HepG2 (cell line): ENCODE measurements at regions of chr2 and their contacts with region 1.

Region 1: GRCh38 chr2:167814881-167815718 is 432.3 kb downstream of the STK39 start:
- DNase-seq: peak; percentile 100
- ATAC-seq: peak; percentile 93
- H3K4me3 ChIP-seq: peak overlapping the region in 2 of 3 experiments; percentile 18 to 42; a peak in 4 of 6 replicates
- H3K27ac ChIP-seq: peak overlapping the region; percentile 90
- H3K4me1 ChIP-seq: peaks cover 69% of the 10 kb centered on the region
- H3K27me3 ChIP-seq: no peaks in the 10 kb centered on the region
- CTCF ChIP-seq: no peak
- EP300 ChIP-seq: peak; percentile 88 to 99; a peak in 3 of 4 replicates
- POLR2A ChIP-seq: no peak
- RAD21 ChIP-seq: 0 out of 2 replicates have a peak, but pooled peaks have one; percentile 36

Region 2: DNA sequence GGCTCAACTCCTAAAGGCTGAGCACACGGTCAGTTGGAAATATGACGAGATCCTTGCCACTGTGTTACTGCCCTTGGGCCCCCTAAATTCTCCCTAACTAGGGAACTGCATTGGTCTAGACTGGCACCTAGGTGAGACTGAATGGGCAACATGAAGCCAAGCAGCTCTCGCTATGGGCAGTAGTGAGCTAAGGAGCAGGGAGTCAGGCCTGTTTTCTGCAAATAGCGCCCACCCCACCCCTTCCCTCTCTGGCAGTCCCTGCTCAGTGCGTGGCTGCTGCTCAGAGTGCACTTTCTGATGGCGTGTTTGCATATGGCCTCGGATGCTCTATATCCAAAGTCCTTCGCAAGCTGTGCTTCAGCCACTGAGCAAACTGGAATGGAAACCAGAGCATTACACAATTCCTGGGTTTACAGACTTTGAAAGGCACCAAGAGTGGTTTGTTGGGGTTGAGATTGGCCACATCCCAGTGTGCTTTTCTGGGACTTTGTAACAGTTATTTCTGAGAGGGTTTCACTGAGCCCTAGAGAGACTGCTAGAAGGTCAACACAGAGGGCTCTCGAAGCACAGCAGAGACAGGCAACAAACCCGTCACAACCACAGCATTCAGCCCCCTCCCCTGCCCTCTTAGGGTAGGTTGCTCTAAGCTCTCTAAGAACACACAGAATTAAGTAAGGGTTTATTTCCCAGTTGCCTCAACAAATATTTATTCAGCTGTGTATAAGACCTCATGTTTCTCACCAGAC is 12.4 kb after region 1 on chr2:
- CTCF ChIA-PET with region 1: no interaction called
- POLR2A ChIA-PET with region 1: interaction called, 16 read pairs
- in situ Hi-C with region 1: no loop called
- intact Hi-C with region 1: no loop called
- DNase-seq: peak; percentile 99
- ATAC-seq: peak; percentile 99
- H3K4me3 ChIP-seq: peak overlapping the region in 1 of 3 experiments; percentile 35; a peak in 3 of 6 replicates
- H3K27ac ChIP-seq: peak overlapping the region; percentile 93
- H3K4me1 ChIP-seq: peaks cover 35% of the 10 kb centered on the region
- H3K27me3 ChIP-seq: no peaks in the 10 kb centered on the region
- CTCF ChIP-seq: peak; percentile 58
- EP300 ChIP-seq: peak; percentile 96
- POLR2A ChIP-seq: peak; percentile 76 to 84
- RAD21 ChIP-seq: peak; percentile 59; the same call in 1 of the 2 replicates